Activated B cell treated with CpG ODN at 0.5 μM for 24 hours (primary cell): ENCODE measurements at regions of chr20 and their contacts with region 1.

Region 1: DNA sequence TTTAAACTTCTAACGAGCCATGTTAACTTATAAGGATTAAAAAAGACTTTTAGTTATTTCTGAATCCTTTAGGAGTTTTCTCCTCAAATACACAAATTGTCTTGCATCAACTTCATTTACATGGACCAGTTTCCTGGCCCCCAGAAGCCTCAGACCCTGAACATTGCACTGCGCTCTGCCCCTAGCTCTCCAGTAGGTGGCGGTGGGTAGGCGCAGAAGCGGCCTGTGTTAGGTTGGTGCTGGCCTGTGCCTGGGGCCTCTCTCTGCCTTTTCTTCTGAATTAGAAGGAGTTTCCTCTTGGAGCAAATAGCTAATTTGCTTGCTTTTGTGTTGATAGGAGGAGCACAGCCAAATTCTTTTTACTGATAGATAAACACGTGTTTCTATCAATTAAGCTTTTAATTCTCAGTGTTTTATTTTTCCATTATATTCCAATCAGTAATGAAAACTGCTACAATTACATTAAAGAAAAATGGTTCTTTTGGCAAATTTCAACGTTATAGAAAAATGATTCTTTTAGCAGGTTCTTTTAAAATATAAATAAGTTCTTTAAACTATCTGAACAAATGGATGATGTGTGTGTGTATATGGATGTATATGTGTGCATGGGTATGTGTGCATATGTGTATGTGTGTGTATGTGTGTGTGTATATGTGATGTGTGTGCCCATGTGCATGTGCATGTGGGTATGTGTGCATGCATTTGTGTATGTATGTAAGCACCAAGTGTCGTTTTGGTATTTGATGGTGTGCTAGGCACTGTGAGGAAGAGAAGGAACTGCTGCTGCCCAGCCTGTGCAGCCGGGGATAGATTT is 44.5 kb downstream of the DTD1 start:
- DNase-seq: peak; percentile 40
- ATAC-seq: peak; percentile 98
- H3K4me3 Mint-ChIP-seq: no peak overlapping the region
- H3K27ac Mint-ChIP-seq: no peak overlapping the region
- H3K4me1 Mint-ChIP-seq: no peaks in the 10 kb centered on the region
- H3K27me3 Mint-ChIP-seq: no peaks in the 10 kb centered on the region
- CTCF ChIP-seq: peak; percentile 77

Region 2: GRCh38 chr20:17648791-17649730 is 983.3 kb before region 1 on chr20:
- CTCF ChIA-PET with region 1: no interaction called
- POLR2A ChIA-PET with region 1: interaction called, 10 read pairs
- intact Hi-C with region 1: no loop called
- DNase-seq: no peak
- ATAC-seq: peak; percentile 75
- H3K4me3 Mint-ChIP-seq: peak overlapping the region; percentile 15
- H3K27ac Mint-ChIP-seq: no peak overlapping the region
- H3K4me1 Mint-ChIP-seq: peaks cover 25% of the 10 kb centered on the region
- H3K27me3 Mint-ChIP-seq: no peaks in the 10 kb centered on the region
- CTCF ChIP-seq: no peak

Region 3: GRCh38 chr20:19056909-19057308 is 424.5 kb after region 1 on chr20:
- CTCF ChIA-PET with region 1: interaction called, 16 read pairs
- POLR2A ChIA-PET with region 1: no interaction called
- intact Hi-C with region 1: no loop called
- DNase-seq: no peak
- ATAC-seq: no peak
- H3K4me3 Mint-ChIP-seq: no peak overlapping the region
- H3K27ac Mint-ChIP-seq: no peak overlapping the region
- H3K4me1 Mint-ChIP-seq: no peaks in the 10 kb centered on the region
- H3K27me3 Mint-ChIP-seq: no peaks in the 10 kb centered on the region
- CTCF ChIP-seq: no peak

Region 4: GRCh38 chr20:19205977-19206396 is 573.6 kb after region 1 on chr20:
- CTCF ChIA-PET with region 1: interaction called, 9 read pairs
- POLR2A ChIA-PET with region 1: no interaction called
- intact Hi-C with region 1: loop called (anchors 1 kb)
- DNase-seq: peak; percentile 57
- ATAC-seq: no peak
- H3K4me3 Mint-ChIP-seq: no peak overlapping the region
- H3K27ac Mint-ChIP-seq: no peak overlapping the region
- H3K4me1 Mint-ChIP-seq: no peaks in the 10 kb centered on the region
- H3K27me3 Mint-ChIP-seq: peaks cover 57% of the 10 kb centered on the region
- CTCF ChIP-seq: peak; percentile 88

Region 5: GRCh38 chr20:19628570-19629169 is 996.3 kb after region 1 on chr20:
- CTCF ChIA-PET with region 1: interaction called, 12 read pairs
- POLR2A ChIA-PET with region 1: no interaction called
- intact Hi-C with region 1: no loop called
- DNase-seq: no peak
- ATAC-seq: peak; percentile 78
- H3K4me3 Mint-ChIP-seq: no peak overlapping the region
- H3K27ac Mint-ChIP-seq: no peak overlapping the region
- H3K4me1 Mint-ChIP-seq: peaks cover 3% of the 10 kb centered on the region
- H3K27me3 Mint-ChIP-seq: peaks cover 8% of the 10 kb centered on the region
- CTCF ChIP-seq: no peak

Region 6: DNA sequence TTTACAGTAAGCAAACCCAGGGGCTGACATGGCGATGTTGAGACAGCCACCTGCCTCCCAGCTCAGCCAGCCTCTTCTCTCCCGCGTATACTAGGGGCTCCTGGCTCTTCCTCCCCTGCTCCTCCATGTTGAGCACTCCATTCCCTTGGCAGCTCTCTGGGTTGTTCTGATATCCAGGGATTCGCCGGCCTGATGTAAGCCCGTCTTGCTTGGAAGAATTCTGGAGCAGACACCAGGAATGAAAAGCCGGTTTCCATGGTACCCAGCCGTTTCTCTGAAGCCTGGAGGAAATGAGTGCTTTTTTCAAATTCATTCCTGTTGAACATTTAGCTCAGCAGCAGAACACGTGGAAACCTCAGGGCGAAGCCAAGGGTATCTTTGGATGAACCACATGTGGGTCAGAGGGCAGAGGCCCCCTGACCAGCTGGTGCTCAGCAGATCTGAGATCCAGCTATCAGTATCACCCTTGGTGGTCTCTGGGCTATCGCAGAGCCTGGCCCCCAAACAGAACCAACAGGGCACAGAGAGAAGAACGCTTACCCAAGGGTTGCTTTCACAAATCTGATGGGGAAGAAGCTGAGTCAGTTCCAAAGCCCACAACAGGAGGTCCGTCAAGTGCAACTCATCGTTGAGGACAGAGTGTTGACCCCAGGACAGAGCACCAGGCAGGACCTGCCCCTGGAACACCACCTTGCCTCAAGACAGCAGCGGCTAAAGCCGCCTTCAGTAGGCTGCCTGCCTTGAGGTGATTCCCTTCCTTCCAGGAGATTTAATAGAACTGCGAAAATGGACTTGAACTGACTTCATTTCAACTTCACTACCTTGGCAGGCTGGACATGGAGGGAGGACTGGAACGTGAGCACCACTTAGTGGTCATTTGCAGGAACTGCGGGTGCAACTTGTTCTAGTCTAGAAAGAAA is 1029.6 kb after region 1 on chr20:
- CTCF ChIA-PET with region 1: interaction called, 12 read pairs
- POLR2A ChIA-PET with region 1: no interaction called
- intact Hi-C with region 1: loop called (anchors 1 kb)
- DNase-seq: peak; percentile 28
- ATAC-seq: peak; percentile 38
- H3K4me3 Mint-ChIP-seq: no peak overlapping the region
- H3K27ac Mint-ChIP-seq: no peak overlapping the region
- H3K4me1 Mint-ChIP-seq: peaks cover 32% of the 10 kb centered on the region
- H3K27me3 Mint-ChIP-seq: peaks cover 21% of the 10 kb centered on the region
- CTCF ChIP-seq: peak; percentile 99

Region 7: DNA sequence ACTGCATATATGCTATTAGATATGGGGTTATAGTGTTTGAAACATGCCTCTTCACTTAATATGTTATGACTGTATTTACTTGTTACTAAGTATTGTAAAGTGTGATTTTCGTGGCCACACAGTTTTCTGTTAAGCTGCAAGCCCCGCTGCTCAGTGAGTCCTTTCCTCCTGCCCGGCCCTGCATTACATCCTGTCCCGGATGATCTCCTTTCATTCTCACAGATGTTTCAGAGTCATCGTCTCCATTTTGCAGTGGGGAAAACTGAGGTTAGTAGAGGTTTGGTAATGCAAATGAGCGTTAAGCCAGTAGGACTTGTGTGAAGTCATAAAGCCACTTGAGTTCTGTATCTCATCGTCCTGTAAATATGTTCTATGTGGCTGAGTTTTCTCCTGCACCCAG is 1575.5 kb after region 1 on chr20:
- CTCF ChIA-PET with region 1: no interaction called
- POLR2A ChIA-PET with region 1: no interaction called
- intact Hi-C with region 1: no loop called
- DNase-seq: no peak
- ATAC-seq: no peak
- H3K4me3 Mint-ChIP-seq: no peak overlapping the region
- H3K27ac Mint-ChIP-seq: no peak overlapping the region
- H3K4me1 Mint-ChIP-seq: no peaks in the 10 kb centered on the region
- H3K27me3 Mint-ChIP-seq: peaks cover 5% of the 10 kb centered on the region
- CTCF ChIP-seq: no peak